Endothelial cell of umbilical vein (primary cell): ENCODE measurements at regions of chr3 and their contacts with region 1.

Region 1: DNA sequence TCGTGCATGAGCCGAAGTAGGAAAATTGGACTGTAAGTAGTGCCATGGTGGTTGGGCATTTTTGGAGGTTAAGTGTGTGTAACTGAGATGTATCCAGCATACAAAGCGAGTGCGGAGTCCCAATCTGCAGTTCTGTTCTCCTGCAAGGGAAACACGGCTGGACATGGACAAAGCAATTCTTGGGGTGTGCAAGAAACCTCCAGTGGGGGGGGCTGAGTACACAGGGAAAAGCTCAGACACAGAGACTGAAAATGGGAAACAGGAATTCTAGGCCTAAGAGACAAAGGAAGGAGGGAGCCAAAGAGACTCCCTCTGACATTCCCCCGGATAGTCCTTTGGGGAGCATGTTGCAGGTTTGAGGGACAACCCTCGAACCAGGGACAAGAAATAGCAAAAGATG is 83.2 kb upstream of the PLSCR4 start:
- DNase-seq: peak; percentile 46
- H3K4me3 ChIP-seq: no peak overlapping the region
- H3K27ac ChIP-seq: no peak overlapping the region
- H3K4me1 ChIP-seq: no peaks in the 10 kb centered on the region
- H3K27me3 ChIP-seq: no peaks in the 10 kb centered on the region
- CTCF ChIP-seq: peak in 1 of 2 donors; percentile 21
- POLR2A ChIP-seq: no peak

Region 2: DNA sequence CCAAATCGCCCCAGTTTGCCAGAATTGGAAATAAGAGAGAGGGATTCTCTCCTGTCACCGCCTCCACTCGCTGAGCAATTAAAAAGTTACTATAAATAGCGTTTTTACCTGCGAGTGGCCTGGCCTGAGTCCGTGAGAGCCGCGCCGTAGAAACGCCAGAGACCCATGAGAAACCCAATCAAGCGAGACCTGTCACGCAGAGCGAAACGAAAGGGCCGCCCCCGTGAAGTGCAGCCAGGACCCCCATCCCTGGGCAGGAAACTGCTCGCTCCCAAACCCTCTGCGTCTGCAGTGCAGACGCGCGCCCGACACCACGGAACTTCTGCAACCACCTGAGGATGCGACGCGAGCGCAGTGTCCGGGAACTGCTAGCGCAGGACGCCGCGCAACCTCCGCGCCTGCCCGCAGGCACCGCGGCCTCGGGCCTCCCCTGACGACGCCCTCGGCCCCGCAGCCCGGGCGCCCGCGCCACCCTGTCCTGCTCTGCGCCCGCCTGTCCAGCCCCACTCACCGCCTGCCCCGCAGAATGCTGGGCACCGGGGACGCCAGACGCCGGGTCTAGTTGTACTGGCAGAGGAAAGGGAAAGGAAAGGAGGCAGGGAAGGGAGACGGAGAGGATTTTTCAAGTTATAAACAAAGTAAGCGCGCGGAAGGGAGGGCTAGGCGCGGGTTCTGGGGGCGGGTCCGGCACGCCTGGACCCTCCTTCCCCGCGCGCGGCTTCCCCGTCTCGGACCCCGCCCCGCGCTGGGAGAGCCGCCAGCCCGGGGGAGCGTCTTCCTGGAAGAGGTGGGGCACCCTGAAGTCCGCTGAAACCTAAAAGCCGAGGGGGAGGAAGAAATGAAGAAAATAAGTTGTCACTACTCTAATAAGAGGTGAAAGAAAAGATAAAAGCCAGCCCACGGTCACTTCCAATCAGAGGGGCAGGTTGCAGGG is 83.4 kb before region 1 on chr3 and contains the start of gene PLSCR4:
- CTCF ChIA-PET with region 1: no interaction called
- POLR2A ChIA-PET with region 1: no interaction called
- dilution Hi-C with region 1: no loop called
- intact Hi-C with region 1: no loop called
- DNase-seq: peak; percentile 93
- H3K4me3 ChIP-seq: peak within 1 kb of the TSS; percentile 94 to 97 (median 96)
- H3K27ac ChIP-seq: peak within 1 kb of the TSS; percentile 77
- H3K4me1 ChIP-seq: peaks cover 36% of the 10 kb centered on the region
- H3K27me3 ChIP-seq: no peaks in the 10 kb centered on the region
- CTCF ChIP-seq: no peak
- POLR2A ChIP-seq: peak; percentile 35
- total RNA-seq, gene PLSCR4: 81.5 and 91.8 TPM in 2 replicates

Region 3: GRCh38 chr3:146503461-146504202 is 169.5 kb after region 1 on chr3:
- CTCF ChIA-PET with region 1: no interaction called
- POLR2A ChIA-PET with region 1: no interaction called
- dilution Hi-C with region 1: no loop called
- intact Hi-C with region 1: loop called (anchors 5 kb)
- DNase-seq: peak; percentile 45
- H3K4me3 ChIP-seq: no peak overlapping the region
- H3K27ac ChIP-seq: no peak overlapping the region
- H3K4me1 ChIP-seq: peaks cover 35% of the 10 kb centered on the region
- H3K27me3 ChIP-seq: no peaks in the 10 kb centered on the region
- CTCF ChIP-seq: no peak
- POLR2A ChIP-seq: no peak

Region 4: GRCh38 chr3:146589899-146590508 is 255.9 kb after region 1 on chr3:
- CTCF ChIA-PET with region 1: interaction called, 8 read pairs
- POLR2A ChIA-PET with region 1: no interaction called
- dilution Hi-C with region 1: no loop called
- intact Hi-C with region 1: loop called (anchors 5 kb)
- DNase-seq: peak; percentile 67
- H3K4me3 ChIP-seq: no peak overlapping the region
- H3K27ac ChIP-seq: no peak overlapping the region
- H3K4me1 ChIP-seq: no peaks in the 10 kb centered on the region
- H3K27me3 ChIP-seq: no peaks in the 10 kb centered on the region
- CTCF ChIP-seq: peak; percentile 23 to 26
- POLR2A ChIP-seq: no peak

Region 5: DNA sequence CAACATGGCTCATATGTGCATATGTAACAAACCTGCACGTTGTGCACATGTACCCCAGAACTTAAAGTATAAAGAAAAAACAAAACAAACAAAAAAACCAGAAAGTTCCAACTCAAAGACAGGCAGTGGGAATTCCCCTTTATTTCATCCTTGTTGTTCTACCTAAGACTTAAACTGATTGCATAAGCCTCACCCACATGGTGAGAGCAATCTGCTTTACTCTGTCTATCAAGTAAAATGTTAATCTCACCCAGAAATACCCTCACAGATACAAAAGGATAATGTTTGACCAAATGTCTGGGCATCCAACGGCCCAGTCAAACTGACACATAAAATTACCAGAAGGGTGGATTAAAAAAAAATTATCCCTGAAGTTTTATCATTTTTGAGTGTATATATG is 461.9 kb after region 1 on chr3:
- CTCF ChIA-PET with region 1: no interaction called
- POLR2A ChIA-PET with region 1: no interaction called
- dilution Hi-C with region 1: no loop called
- intact Hi-C with region 1: no loop called
- DNase-seq: no peak
- H3K4me3 ChIP-seq: no peak overlapping the region
- H3K27ac ChIP-seq: no peak overlapping the region
- H3K4me1 ChIP-seq: no peaks in the 10 kb centered on the region
- H3K27me3 ChIP-seq: no peaks in the 10 kb centered on the region
- CTCF ChIP-seq: no peak
- POLR2A ChIP-seq: no peak